Dendritic cell treated with granulocyte-macrophage colony-stimulating factor and Interleukin-4, amounts not matched to agents 40 ng/mL and 50 ng/mL, for 4 days (primary cell): ENCODE measurements at regions of chr1 and their contacts with region 1.

Region 1: GRCh38 chr1:26921540-26922430 is at the start of gene NUDC:
- H3K4me3 Mint-ChIP-seq: peak within 1 kb of the TSS; percentile 81
- H3K27ac Mint-ChIP-seq: peak within 1 kb of the TSS; percentile 80
- H3K4me1 Mint-ChIP-seq: peaks cover 26% of the 10 kb centered on the region
- H3K27me3 Mint-ChIP-seq: no peaks in the 10 kb centered on the region

Region 2: DNA sequence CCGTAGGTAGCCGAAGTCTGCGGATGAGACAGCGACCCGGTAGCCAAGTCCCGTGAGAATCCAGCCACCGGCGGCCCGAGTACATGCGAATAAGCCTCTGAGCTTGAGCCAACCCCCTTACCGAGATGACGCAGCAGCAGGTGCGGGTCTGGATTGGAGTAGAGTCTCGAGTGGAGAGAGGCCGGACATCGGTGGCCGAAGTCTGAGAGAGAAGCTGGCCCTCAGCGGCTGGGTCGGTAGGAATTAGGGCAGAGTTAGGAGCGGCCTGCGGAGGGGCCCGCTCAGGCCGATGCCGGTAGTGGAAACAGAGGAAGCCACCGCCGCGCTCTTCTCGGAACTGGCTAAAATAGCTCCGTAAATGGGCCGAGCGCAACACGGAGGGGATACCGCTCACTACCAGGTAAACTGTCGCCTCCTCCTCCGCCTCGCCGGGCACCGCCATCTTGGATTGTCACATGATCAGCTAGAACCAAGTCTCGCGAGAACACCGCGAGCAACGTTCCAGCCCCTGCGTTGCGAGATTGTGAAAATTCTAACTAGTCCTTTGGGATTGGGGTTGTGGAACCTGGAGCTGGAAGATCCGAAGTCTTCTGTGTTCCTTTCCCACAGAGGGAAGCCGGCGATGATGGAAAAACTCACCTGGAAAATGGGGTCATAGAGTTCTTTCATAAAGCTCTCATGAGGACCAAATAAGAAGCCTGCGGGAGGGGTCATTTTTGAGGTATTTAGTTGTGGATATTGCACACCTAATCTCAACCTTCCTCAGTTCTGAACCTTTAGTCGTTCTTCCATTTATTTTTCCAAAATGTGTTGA is 21.6 kb before region 1 on chr1 and contains the start of gene GPATCH3:
- intact Hi-C with region 1: loop called (anchors 1 kb)
- H3K4me3 Mint-ChIP-seq: peak within 1 kb of the TSS; percentile 87
- H3K27ac Mint-ChIP-seq: peak within 1 kb of the TSS; percentile 91
- H3K4me1 Mint-ChIP-seq: peaks cover 30% of the 10 kb centered on the region
- H3K27me3 Mint-ChIP-seq: peaks cover 3% of the 10 kb centered on the region